ENCODE measurements at regions of chr7 and their contacts with region 1.

Region 1: GRCh38 chr7:81776948-81777630 is 7.2 kb upstream of the HGF start:
- DNase-seq: no peak
- H3K4me3 ChIP-seq: no peak overlapping the region
- H3K27ac ChIP-seq: no peak overlapping the region
- H3K4me1 ChIP-seq: no peaks in the 10 kb centered on the region
- H3K27me3 ChIP-seq: no peaks in the 10 kb centered on the region
- CTCF ChIP-seq: no peak
- POLR2A ChIP-seq: no peak

Region 2: GRCh38 chr7:81791568-81792518 is 14.8 kb after region 1 on chr7:
- CTCF ChIA-PET with region 1: interaction called, 14 read pairs
- POLR2A ChIA-PET with region 1: no interaction called
- dilution Hi-C with region 1: no loop called
- intact Hi-C with region 1: no loop called
- DNase-seq: no peak
- H3K4me3 ChIP-seq: no peak overlapping the region
- H3K27ac ChIP-seq: no peak overlapping the region
- H3K4me1 ChIP-seq: no peaks in the 10 kb centered on the region
- H3K27me3 ChIP-seq: no peaks in the 10 kb centered on the region
- CTCF ChIP-seq: no peak
- POLR2A ChIP-seq: no peak

Region 3: DNA sequence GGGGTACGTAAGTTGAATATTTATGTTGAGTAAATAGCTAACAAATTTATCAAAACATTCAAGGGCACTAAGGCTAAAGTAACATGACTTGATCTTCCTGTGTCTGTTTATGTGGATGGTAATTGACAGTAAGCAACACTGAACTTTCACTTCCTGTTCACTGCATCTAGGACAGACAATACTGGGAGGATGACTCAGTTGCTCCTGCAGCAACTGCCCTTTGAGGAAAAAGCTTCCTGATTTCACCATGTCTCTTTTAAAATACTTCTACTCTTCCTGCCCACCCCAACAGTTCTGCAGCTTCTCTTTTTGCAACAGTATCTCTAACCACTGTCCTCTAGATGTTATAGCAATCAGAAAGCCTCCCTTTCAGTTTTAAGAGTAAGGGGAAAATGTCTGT is 69.3 kb after region 1 on chr7:
- CTCF ChIA-PET with region 1: no interaction called
- POLR2A ChIA-PET with region 1: no interaction called
- dilution Hi-C with region 1: no loop called
- intact Hi-C with region 1: no loop called
- DNase-seq: peak; percentile 53
- H3K4me3 ChIP-seq: no peak overlapping the region
- H3K27ac ChIP-seq: no peak overlapping the region
- H3K4me1 ChIP-seq: peaks cover 8% of the 10 kb centered on the region
- H3K27me3 ChIP-seq: no peaks in the 10 kb centered on the region
- CTCF ChIP-seq: no peak
- POLR2A ChIP-seq: no peak

Measured in endothelial cell of umbilical vein (primary cell).